Ascending aorta (tissue), 2 donors: ENCODE measurements at regions of chr1 and their contacts with region 1.

Region 1: DNA sequence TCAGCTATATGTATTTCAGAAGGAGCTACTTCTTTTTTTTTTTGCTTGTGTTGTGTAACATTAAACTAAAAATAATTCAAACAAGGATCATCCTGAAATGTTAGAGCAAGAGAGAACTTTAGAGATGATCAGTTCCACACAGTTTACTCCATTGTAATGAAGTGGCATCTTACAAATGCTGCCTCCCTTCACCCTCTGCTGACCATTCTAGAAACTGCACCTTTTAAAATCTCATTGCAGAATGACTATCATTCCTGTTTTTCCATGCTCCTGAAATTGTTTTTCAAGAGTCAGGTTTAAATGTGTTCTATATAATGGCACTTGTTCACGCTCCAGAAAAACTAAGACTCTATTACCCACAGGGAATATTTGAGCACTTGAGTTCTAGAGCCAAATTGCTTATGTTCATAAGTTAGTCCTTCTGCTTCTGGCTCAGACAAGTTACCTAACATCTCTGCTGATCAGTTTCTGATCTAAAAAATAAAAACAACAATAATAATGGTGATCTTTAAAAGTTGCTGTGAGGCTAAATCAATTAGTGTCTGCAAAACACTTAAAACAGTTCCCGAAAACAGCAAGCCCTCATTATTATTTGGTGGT is 21.5 kb upstream of the SLC44A5 start:
- DNase-seq: no peak
- H3K4me3 ChIP-seq: no peak overlapping the region
- H3K27ac ChIP-seq: no peak overlapping the region
- H3K4me1 ChIP-seq: no peaks in the 10 kb centered on the region
- H3K27me3 ChIP-seq: no peaks in the 10 kb centered on the region
- CTCF ChIP-seq: peak; percentile 13 to 62 (median 57)

Region 2: GRCh38 chr1:74038042-74038441 is 1594.4 kb before region 1 on chr1:
- intact Hi-C with region 1: no loop called
- DNase-seq: no peak
- H3K4me3 ChIP-seq: no peak overlapping the region
- H3K27ac ChIP-seq: no peak overlapping the region
- H3K4me1 ChIP-seq: no peaks in the 10 kb centered on the region
- H3K27me3 ChIP-seq: no peaks in the 10 kb centered on the region
- CTCF ChIP-seq: no peak

Region 3: GRCh38 chr1:74771913-74772515 is 860.4 kb before region 1 on chr1:
- intact Hi-C with region 1: loop called (anchors 5 kb)
- DNase-seq: no peak
- H3K4me3 ChIP-seq: no peak overlapping the region
- H3K27ac ChIP-seq: no peak overlapping the region
- H3K4me1 ChIP-seq: no peaks in the 10 kb centered on the region
- H3K27me3 ChIP-seq: no peaks in the 10 kb centered on the region
- CTCF ChIP-seq: peak in 2 of 3 experiments; percentile 53 to 65

Region 4: DNA sequence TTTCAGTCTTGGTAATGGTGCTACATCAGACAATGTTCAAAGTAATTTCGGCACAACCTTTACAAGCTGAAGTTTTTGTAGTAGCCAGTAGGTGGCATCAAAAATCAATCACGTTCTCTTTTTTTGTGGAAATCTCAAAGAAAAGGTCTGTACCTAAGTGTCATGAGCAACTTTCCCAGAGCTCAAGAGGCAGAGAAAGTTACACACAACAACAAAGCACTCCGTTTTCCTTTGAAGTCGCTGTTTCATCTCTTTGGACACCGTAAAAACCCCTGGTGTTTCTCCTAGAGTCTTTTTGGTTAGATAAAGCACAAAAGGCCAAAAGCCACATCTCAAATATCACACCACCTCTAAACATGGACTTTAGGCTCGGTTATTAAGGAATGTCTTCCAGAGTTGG is 366.7 kb before region 1 on chr1:
- intact Hi-C with region 1: loop called (anchors 5 kb)
- DNase-seq: no peak
- H3K4me3 ChIP-seq: no peak overlapping the region
- H3K27ac ChIP-seq: no peak overlapping the region
- H3K4me1 ChIP-seq: no peaks in the 10 kb centered on the region
- H3K27me3 ChIP-seq: no peaks in the 10 kb centered on the region
- CTCF ChIP-seq: peak in 2 of 3 experiments; percentile 17 to 54

Region 5: GRCh38 chr1:75672528-75673393 is 40.3 kb after region 1 on chr1:
- intact Hi-C with region 1: no loop called
- DNase-seq: no peak
- H3K4me3 ChIP-seq: no peak overlapping the region
- H3K27ac ChIP-seq: no peak overlapping the region
- H3K4me1 ChIP-seq: no peaks in the 10 kb centered on the region
- H3K27me3 ChIP-seq: no peaks in the 10 kb centered on the region
- CTCF ChIP-seq: no peak

Region 6: DNA sequence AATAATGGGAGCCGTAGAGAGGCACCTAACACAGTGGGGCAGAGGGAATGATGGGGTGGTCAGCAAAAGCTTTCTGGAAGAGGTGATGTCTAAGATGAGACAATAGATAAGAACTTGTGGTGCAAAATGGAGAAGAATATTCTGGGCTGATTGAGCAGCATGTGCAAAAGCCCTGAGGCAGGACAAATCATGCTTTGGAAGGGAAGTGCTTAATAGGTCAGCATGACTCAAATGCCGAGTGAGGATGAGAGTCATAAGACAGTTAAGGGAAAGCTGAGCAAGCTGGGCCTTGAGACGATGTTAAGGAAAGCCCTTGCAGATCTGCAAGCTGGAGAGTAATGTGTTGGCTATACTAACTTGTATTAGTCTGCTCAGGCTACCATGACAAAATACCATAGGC is 337.1 kb after region 1 on chr1:
- intact Hi-C with region 1: no loop called
- DNase-seq: no peak
- H3K4me3 ChIP-seq: no peak overlapping the region
- H3K27ac ChIP-seq: no peak overlapping the region
- H3K4me1 ChIP-seq: no peaks in the 10 kb centered on the region
- H3K27me3 ChIP-seq: no peaks in the 10 kb centered on the region
- CTCF ChIP-seq: no peak